ENCODE measurements at regions of chr14 and their contacts with region 1.

Region 1: DNA sequence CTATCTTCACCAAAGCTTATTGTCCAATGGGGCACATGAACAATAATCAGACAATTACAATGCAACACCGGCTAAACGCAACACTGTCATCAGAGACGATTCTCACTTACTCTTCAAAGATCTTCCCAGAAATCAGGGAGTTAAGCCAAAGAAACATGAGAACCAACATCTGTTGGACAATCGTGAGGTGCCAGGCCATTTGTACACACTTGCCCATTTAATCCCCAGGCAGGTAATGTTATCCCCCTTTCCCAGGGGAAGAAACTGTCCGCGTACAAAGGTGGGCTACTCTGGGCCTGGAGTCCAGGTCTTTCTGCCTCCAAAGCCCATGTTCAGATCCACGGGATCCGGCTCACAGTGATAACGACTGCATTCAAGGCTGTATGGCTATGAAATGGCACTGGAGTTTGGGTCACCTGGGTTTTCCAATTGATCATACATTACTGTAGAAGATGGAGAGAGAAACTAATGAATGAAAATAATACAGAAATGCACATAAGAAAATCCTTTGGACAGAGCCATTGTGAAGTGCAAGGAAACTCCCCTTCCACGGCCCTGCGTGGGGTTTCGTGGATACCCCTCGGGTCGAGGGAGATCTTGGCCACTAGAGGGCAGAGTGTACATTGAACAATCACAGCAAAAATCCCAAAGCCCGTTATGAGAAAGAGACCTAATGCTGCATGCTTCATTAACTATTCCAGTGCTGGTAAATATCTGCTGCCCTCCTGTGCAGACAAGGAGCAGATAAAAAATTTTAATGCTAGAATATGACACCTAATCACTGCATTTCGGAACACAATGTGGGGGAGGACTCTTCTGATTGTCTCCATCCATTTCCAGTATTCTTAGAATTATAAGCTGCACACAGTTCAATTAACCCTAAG is 111.4 kb downstream of the EGLN3 start:
- DNase-seq: peak; percentile 40 to 51 (median 47)
- H3K4me3 ChIP-seq: no peak overlapping the region
- H3K27ac ChIP-seq: no peak overlapping the region
- H3K4me1 ChIP-seq: no peaks in the 10 kb centered on the region
- H3K27me3 ChIP-seq: no peaks in the 10 kb centered on the region
- CTCF ChIP-seq: peak; percentile 25 to 45 (median 36)
- EP300 ChIP-seq: no peak
- POLR2A ChIP-seq: no peak

Region 2: DNA sequence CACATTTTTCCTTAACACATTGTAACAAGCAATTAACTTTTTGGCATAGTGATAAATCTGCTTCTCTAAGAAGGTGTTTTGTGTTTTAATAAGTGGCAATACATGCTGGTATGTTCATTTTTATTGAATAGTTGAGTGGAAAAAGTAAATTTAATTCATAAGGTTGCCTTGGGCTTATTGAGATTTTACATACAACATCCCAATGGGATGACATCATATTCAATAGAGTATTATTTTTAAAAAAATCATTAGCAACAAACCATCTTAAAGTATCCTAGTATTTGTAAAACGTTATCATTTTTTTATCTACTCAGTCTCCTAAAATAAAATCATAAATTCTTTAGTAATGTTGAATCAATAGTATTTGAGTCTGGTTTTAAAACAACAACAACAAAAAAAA is 663.9 kb before region 1 on chr14:
- intact Hi-C with region 1: no loop called
- DNase-seq: no peak
- H3K4me3 ChIP-seq: no peak overlapping the region
- H3K27ac ChIP-seq: no peak overlapping the region
- H3K4me1 ChIP-seq: no peaks in the 10 kb centered on the region
- H3K27me3 ChIP-seq: no peaks in the 10 kb centered on the region
- CTCF ChIP-seq: no peak
- EP300 ChIP-seq: no peak
- POLR2A ChIP-seq: no peak

Region 3: DNA sequence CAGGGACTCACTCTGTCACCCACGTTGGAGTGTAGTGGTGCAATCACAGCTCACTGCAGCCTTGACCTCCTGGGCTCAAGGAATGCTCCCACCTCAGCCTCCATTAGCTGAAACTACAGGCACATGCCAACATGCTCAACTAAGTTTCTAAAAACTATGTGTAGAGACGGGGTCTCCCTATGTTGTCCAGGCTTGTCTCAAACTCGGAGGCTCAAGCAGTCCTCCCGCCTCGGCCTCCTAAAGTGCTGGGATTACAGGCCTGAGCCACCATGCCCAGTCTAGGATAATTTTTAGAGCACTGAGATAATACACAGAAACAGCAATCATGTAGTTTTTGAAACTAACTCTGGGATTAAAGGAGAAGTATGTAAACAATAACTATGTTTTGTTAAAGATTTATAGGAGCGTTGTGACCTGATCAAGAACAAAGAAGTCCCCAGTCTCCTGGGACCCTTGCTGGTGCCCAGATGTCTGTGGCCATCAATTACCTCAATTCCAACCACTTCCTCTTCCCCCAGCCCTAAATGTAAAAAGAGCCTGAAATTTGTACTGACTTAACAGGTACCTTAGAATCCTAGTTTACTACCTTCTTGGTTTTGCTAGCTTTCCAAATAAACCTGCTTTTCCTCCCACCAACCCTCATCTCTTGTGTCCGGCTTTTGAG is 140.3 kb after region 1 on chr14:
- intact Hi-C with region 1: no loop called
- DNase-seq: no peak
- H3K4me3 ChIP-seq: no peak overlapping the region
- H3K27ac ChIP-seq: no peak overlapping the region
- H3K4me1 ChIP-seq: no peaks in the 10 kb centered on the region
- H3K27me3 ChIP-seq: no peaks in the 10 kb centered on the region
- CTCF ChIP-seq: no peak
- EP300 ChIP-seq: no peak
- POLR2A ChIP-seq: no peak

Region 4: GRCh38 chr14:34098045-34098984 is 258.9 kb after region 1 on chr14:
- intact Hi-C with region 1: loop called (anchors 2 to 10 kb)
- DNase-seq: peak; percentile 18 to 60 (median 37)
- H3K4me3 ChIP-seq: no peak overlapping the region
- H3K27ac ChIP-seq: no peak overlapping the region
- H3K4me1 ChIP-seq: no peaks in the 10 kb centered on the region
- H3K27me3 ChIP-seq: no peaks in the 10 kb centered on the region
- CTCF ChIP-seq: peak in 2 of 3 donors; percentile 47 to 64
- EP300 ChIP-seq: no peak
- POLR2A ChIP-seq: no peak

Region 5: GRCh38 chr14:34237081-34237480 is 397.6 kb after region 1 on chr14:
- intact Hi-C with region 1: loop called in 1 of 4 experiments (anchors 10 kb)
- DNase-seq: no peak
- H3K4me3 ChIP-seq: no peak overlapping the region
- H3K27ac ChIP-seq: no peak overlapping the region
- H3K4me1 ChIP-seq: no peaks in the 10 kb centered on the region
- H3K27me3 ChIP-seq: no peaks in the 10 kb centered on the region
- CTCF ChIP-seq: no peak
- EP300 ChIP-seq: no peak
- POLR2A ChIP-seq: no peak

Measured in ovary (tissue), 10 donors.